WTC11 (cell line): ENCODE measurements at regions of chr2 and their contacts with region 1.

Region 1: GRCh38 chr2:158753641-158754611 is 41.2 kb upstream of the DAPL1 start:
- DNase-seq: peak; percentile 22
- ATAC-seq: peak; percentile 88
- H3K4me3 Mint-ChIP-seq: peak overlapping the region; percentile 47
- H3K27ac Mint-ChIP-seq: no peak overlapping the region
- H3K4me1 Mint-ChIP-seq: peaks cover 8% of the 10 kb centered on the region
- H3K27me3 Mint-ChIP-seq: no peaks in the 10 kb centered on the region
- CTCF ChIP-seq: peak; percentile 81

Region 2: DNA sequence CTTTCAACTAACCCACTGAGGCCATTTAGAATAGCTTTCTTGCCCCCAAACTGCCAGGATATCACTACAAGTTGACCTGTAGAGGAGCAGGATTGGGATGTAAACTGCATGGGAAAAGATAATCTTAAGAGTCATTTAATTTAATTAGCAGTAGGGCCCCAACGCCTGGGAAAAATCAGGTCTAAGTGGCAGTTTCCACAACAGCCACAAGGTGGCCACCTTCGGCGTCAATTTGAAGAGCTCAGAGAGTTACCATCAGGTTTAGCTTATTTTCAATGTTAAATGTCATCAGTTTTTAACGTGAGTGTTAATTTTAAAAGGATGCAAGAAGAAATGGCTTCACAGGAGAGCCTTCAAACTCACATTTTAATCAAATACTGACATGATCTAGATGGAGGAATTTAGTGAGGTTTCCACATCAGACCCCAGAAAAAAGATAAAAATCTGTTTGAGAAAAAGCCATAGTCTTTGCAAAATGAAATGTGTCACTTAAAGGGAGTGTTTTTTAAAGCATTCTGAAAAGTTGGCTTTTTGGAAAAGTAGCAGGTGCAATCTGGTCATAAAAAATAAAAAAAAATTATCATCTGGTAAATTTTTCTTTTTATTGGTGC is 729.5 kb before region 1 on chr2:
- CTCF ChIA-PET with region 1: interaction called, 41 read pairs
- POLR2A ChIA-PET with region 1: no interaction called
- DNase-seq: peak; percentile 65
- ATAC-seq: peak; percentile 60
- H3K4me3 Mint-ChIP-seq: no peak overlapping the region
- H3K27ac Mint-ChIP-seq: no peak overlapping the region
- H3K4me1 Mint-ChIP-seq: 0 out of 2 replicates have a peak, but pooled peaks cover 2% of the 10 kb centered on the region
- H3K27me3 Mint-ChIP-seq: no peaks in the 10 kb centered on the region; the same call in 1 of the 2 replicates
- CTCF ChIP-seq: peak; percentile 71

Region 3: GRCh38 chr2:158179660-158180059 is 574.3 kb before region 1 on chr2:
- CTCF ChIA-PET with region 1: interaction called, 25 read pairs
- POLR2A ChIA-PET with region 1: no interaction called
- DNase-seq: no peak
- ATAC-seq: peak; percentile 53
- H3K4me3 Mint-ChIP-seq: no peak overlapping the region
- H3K27ac Mint-ChIP-seq: no peak overlapping the region
- H3K4me1 Mint-ChIP-seq: peaks cover 27% of the 10 kb centered on the region
- H3K27me3 Mint-ChIP-seq: peaks cover 4% of the 10 kb centered on the region; the same call in 1 of the 2 replicates
- CTCF ChIP-seq: no peak

Region 4: DNA sequence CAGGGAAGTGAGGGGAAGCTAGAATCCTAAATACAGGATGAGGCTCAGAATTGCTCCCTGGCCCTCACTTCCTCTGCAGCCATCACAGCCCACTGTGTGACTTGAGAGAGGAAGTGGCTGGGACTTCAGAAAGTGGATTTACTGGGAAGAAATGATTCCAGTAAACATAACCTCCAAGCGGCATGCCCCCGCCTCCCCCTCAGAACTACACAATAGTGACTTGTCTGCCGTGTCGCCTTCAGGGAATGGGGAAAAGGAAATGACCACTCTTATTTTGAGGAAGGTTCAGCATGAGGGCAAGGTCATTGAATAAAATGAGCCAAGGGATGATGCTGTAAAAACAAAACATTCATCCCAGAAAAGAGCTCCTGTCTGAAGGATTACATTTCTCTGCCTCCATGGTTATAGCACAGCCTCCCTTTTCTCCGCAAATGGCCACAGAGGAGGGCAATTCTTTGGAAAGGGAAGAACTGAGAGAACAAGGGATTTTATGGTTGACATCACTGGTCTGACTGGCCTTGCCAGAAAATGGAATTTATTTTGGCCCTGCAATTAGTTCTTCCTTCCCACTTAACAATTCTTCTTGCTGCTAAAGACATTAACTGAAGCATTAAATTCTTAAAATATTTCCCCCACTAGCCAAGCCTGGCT is 37.7 kb before region 1 on chr2:
- CTCF ChIA-PET with region 1: interaction called, 11 read pairs
- POLR2A ChIA-PET with region 1: no interaction called
- DNase-seq: no peak
- ATAC-seq: peak; percentile 30; the same call in 1 of the 2 replicates
- H3K4me3 Mint-ChIP-seq: no peak overlapping the region
- H3K27ac Mint-ChIP-seq: no peak overlapping the region
- H3K4me1 Mint-ChIP-seq: peaks cover 12% of the 10 kb centered on the region
- H3K27me3 Mint-ChIP-seq: no peaks in the 10 kb centered on the region; the same call in 1 of the 2 replicates
- CTCF ChIP-seq: no peak

Region 5: DNA sequence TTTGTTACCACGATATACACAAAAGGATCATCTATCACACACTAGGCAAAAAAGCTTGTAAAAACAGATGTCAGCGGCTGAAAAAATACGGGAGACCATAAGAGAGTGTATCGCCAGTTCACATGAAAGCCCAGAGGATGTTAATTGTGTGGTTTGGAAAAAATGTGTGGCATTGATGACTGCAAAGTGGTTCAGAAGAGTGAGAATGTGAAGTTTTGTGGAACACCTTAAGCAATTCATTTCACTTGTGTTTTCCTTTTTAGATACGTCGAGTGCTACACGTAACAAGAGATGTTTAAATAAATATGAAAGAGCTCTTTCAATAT is 20.5 kb before region 1 on chr2:
- CTCF ChIA-PET with region 1: interaction called, 19 read pairs
- POLR2A ChIA-PET with region 1: no interaction called
- DNase-seq: no peak
- ATAC-seq: no peak
- H3K4me3 Mint-ChIP-seq: no peak overlapping the region
- H3K27ac Mint-ChIP-seq: no peak overlapping the region
- H3K4me1 Mint-ChIP-seq: peaks cover 4% of the 10 kb centered on the region; the same call in 1 of the 2 replicates
- H3K27me3 Mint-ChIP-seq: no peaks in the 10 kb centered on the region
- CTCF ChIP-seq: no peak

Region 6: DNA sequence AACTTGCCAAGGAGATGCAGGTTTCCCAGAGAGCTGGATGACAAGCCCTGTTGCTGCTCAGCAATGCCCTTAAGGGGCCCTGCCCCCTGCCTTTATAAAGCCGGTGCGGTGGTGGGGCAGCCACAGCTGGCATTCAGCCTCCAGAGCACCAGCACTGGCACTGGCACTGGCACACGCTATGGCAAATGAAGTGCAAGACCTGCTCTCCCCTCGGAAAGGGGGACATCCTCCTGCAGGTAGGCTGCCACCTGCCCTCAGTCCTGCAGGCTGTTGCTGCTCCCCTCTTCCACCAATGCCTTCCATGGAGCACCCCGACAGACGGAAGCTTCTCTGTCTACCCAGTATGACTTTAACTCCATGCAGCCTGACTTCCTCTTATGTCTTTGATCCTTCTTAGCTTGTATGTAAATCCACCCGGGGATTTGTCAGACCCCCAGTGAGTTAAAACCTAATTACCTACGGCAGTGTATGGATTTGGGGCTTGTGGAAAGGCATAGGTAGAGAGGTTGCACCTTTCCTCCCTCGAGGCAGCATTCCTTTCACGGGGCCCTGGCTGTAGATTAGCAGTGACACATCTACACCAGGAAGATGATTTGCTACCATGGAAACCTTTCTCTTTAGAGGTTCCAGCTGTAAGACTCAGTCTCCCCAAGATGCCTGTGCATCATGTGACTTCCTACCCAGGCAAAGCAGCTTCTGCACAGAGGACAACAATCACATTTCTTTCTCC is 41.4 kb after region 1 on chr2 and contains the start of gene DAPL1:
- CTCF ChIA-PET with region 1: interaction called, 10 read pairs
- POLR2A ChIA-PET with region 1: no interaction called
- DNase-seq: peak; percentile 12
- ATAC-seq: peak; percentile 83
- H3K4me3 Mint-ChIP-seq: no peak within 1 kb of the TSS
- H3K27ac Mint-ChIP-seq: no peak within 1 kb of the TSS
- H3K4me1 Mint-ChIP-seq: peaks cover 23% of the 10 kb centered on the region
- H3K27me3 Mint-ChIP-seq: no peaks in the 10 kb centered on the region
- CTCF ChIP-seq: no peak
- total RNA-seq, gene DAPL1: not detected in 3 replicates

Region 7: DNA sequence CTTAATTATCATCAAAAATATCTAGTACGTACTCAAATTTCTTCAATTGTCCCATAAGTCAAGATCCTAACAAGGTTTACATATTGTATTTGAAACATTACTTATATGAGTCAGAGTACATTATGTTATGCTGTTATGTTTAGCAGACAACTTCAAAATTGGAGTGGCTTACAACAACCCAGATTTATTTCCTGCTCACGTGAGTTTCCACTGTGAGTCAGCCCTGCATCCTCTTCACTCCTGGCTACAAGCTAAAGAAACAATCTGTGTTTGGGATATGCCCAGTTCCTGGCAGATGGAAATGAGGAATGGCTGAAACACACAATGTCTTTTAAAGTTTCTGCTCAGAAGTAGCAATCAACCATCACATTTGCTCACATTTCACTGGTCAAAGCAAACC is 183.1 kb after region 1 on chr2:
- CTCF ChIA-PET with region 1: no interaction called
- POLR2A ChIA-PET with region 1: no interaction called
- DNase-seq: no peak
- ATAC-seq: no peak
- H3K4me3 Mint-ChIP-seq: no peak overlapping the region
- H3K27ac Mint-ChIP-seq: no peak overlapping the region
- H3K4me1 Mint-ChIP-seq: peaks cover 15% of the 10 kb centered on the region
- H3K27me3 Mint-ChIP-seq: peaks cover 11% of the 10 kb centered on the region
- CTCF ChIP-seq: no peak

Region 8: DNA sequence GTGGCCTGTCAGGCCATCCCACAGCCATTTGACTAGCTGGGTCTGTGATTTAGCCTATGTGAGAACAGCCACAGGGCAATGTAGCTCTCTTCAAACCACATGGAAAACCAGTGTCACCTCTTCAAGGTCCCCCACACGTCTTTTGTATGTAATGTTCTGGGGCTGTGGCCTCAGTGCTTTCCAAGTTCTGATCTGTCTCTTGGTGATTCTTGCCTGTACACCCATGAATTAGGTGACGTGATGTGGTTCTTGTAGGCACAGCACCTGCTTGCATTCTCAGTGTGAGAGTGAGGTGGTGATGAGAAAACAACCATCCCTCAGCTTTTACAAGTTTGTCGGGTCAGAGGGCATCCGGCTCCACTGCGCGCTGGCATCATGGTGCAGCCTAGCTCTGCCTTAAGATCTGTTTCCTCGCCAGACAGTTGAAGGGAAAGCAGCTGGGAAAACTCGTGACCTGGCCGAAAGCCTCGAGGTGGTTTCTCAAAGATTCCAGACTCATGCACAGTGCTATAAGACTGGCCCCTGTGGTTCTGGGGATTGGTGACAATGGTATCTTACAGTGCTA is 340.3 kb after region 1 on chr2:
- CTCF ChIA-PET with region 1: no interaction called
- POLR2A ChIA-PET with region 1: no interaction called
- DNase-seq: no peak
- ATAC-seq: no peak
- H3K4me3 Mint-ChIP-seq: no peak overlapping the region
- H3K27ac Mint-ChIP-seq: no peak overlapping the region
- H3K4me1 Mint-ChIP-seq: peaks cover 4% of the 10 kb centered on the region
- H3K27me3 Mint-ChIP-seq: no peaks in the 10 kb centered on the region
- CTCF ChIP-seq: no peak